AG04449 (cell line): ENCODE measurements at regions of chr1 and their contacts with region 1.

Region 1: GRCh38 chr1:27858072-27858958 is 14.0 kb upstream of the THEMIS2 start:
- DNase-seq: peak; percentile 17
- H3K4me3 ChIP-seq: no peak overlapping the region
- CTCF ChIP-seq: peak; percentile 92

Region 2: GRCh38 chr1:27835501-27835900 is 22.8 kb before region 1 on chr1:
- CTCF ChIA-PET with region 1: interaction called, 23 read pairs
- POLR2A ChIA-PET with region 1: interaction called, 3 read pairs
- DNase-seq: no peak
- H3K4me3 ChIP-seq: no peak overlapping the region
- CTCF ChIP-seq: no peak

Region 3: DNA sequence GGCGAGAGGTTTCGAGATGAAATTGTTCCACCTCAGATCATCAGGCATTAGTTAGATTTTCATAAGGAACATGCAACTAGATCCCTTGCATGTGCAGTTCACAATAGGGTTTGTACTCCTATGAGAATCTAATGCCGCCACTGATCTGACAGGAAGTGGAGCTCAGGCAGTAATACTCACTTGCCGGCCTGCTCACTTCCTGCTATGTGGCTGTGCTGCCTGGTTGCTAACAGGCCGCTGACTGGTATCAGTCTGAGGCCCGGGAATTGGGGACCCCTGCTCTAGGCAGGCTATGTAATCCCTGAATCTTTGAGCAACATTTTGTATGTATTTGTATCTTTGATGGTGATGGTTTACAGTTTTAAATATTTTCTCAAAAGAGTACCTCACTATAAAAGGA is 134.0 kb after region 1 on chr1:
- CTCF ChIA-PET with region 1: interaction called, 12 read pairs
- POLR2A ChIA-PET with region 1: no interaction called
- DNase-seq: no peak
- H3K4me3 ChIP-seq: no peak overlapping the region
- CTCF ChIP-seq: no peak

Region 4: DNA sequence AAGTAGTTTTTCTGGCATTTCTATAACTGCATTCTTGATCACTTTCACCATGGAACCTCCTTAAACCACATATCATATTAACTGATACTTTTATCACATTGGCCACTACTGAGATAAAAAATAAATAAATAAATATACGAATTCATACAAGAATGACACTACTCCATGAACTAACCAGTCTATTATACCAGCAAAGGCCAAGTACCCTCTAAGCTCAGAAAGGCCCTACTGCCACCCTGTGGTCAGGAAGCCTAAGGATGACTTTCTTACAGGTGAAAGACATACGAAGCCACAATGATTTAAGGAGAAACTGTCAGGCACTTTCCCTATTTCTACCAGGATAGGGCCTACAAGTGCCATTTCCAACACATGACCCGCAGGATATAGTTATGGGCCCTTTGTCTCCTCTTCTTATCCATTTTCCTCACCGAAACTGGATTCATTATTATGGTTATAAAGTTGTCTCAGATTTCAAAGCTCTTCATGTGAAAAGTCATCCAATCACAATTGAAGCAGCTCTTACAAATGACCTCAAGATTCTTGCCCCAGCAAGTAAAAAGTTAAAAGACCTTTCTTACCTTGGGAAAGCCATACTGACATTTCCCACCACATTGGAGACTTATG is 350.6 kb after region 1 on chr1:
- CTCF ChIA-PET with region 1: interaction called, 12 read pairs
- POLR2A ChIA-PET with region 1: no interaction called
- DNase-seq: no peak
- H3K4me3 ChIP-seq: no peak overlapping the region
- CTCF ChIP-seq: peak; percentile 72